ENCODE measurements at regions of chr6 and their contacts with region 1.

Region 1: GRCh38 chr6:150697515-150697914 is 97.8 kb downstream of the PLEKHG1 start:
- DNase-seq: no peak
- ATAC-seq: no peak
- H3K4me3 Mint-ChIP-seq: no peak overlapping the region
- H3K27ac Mint-ChIP-seq: no peak overlapping the region
- H3K4me1 Mint-ChIP-seq: peaks cover 8% of the 10 kb centered on the region
- H3K27me3 Mint-ChIP-seq: no peaks in the 10 kb centered on the region

Region 2: DNA sequence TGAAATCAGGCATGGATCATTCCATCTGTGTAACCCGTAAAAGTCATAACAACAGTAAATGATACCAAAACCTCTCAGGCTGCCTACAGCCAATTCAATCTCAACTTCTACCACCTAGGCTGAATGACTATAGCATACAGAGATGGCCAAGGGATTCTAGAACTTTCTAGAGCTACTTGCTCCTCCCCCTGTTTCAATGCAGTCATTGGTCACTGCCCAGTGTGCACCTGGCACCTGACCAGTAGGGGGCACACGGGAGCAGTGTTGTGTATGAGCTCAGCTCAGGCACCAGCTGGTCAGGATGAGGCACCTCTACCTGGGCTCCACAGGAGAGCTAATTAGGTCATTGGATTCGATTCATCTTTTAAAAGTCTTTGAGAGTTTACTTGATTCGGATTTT is 11.7 kb before region 1 on chr6:
- CTCF ChIA-PET with region 1: interaction called, 16 read pairs
- POLR2A ChIA-PET with region 1: no interaction called
- intact Hi-C with region 1: no loop called
- DNase-seq: peak; percentile 81
- ATAC-seq: peak; percentile 92
- H3K4me3 Mint-ChIP-seq: no peak overlapping the region
- H3K27ac Mint-ChIP-seq: no peak overlapping the region
- H3K4me1 Mint-ChIP-seq: no peaks in the 10 kb centered on the region
- H3K27me3 Mint-ChIP-seq: no peaks in the 10 kb centered on the region